Caco-2 (cell line): ENCODE measurements at regions of chr12 and their contacts with region 1.

Region 1: GRCh38 chr12:106223485-106224354 is 24.1 kb downstream of the CKAP4 start:
- DNase-seq: peak; percentile 68 to 79
- H3K4me3 ChIP-seq: no peak overlapping the region
- H3K4me3 Mint-ChIP-seq: no peak overlapping the region
- H3K27ac Mint-ChIP-seq: no peak overlapping the region
- H3K4me1 ChIP-seq: peaks cover 9% of the 10 kb centered on the region; the same call in 1 of the 2 replicates
- H3K4me1 Mint-ChIP-seq: peaks cover 8% of the 10 kb centered on the region
- H3K27me3 ChIP-seq: no peaks in the 10 kb centered on the region; the same call in 1 of the 2 replicates
- H3K27me3 Mint-ChIP-seq: peaks cover 3% of the 10 kb centered on the region
- CTCF ChIP-seq: peak; percentile 90 to 91

Region 2: DNA sequence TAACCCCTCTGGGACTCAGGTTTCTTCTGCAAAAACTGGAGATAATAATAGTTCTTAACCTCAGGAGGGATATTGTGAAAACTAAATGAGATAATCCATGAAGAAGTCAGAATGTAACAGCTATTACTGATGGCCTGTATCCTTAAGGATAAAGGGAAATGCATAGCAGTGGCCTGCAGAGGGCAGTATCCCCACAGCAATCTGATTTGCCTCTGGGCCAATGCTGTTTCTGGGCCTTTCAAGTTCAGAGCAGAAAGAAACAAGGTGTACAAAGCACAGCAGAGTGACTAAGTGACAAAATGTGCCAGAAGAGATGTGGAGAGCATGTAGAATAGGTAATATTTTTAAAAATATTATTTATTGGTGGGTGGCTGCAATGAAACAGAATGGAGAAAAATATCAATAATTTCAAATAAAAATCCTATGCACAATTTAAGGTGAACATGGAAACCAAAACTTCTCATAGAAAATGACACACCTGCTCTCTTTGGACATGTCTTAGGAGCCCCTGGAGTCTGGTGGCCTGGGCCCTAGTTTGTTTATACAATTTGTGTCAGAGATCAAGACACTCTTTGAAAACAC is 803.0 kb before region 1 on chr12:
- CTCF ChIA-PET with region 1: interaction called, 10 read pairs
- POLR2A ChIA-PET with region 1: no interaction called
- intact Hi-C with region 1: loop called (anchors 1 kb)
- DNase-seq: peak; percentile 73 to 82
- H3K4me3 ChIP-seq: no peak overlapping the region
- H3K4me3 Mint-ChIP-seq: no peak overlapping the region
- H3K27ac Mint-ChIP-seq: no peak overlapping the region
- H3K4me1 ChIP-seq: 0 out of 2 replicates have a peak, but pooled peaks cover under 1% of the 10 kb centered on the region
- H3K4me1 Mint-ChIP-seq: peaks cover 22% of the 10 kb centered on the region
- H3K27me3 ChIP-seq: no peaks in the 10 kb centered on the region
- H3K27me3 Mint-ChIP-seq: no peaks in the 10 kb centered on the region
- CTCF ChIP-seq: peak; percentile 80 to 90

Region 3: GRCh38 chr12:106123551-106124081 is 100.1 kb before region 1 on chr12:
- CTCF ChIA-PET with region 1: no interaction called
- POLR2A ChIA-PET with region 1: no interaction called
- intact Hi-C with region 1: no loop called
- DNase-seq: peak; percentile 43 to 62
- H3K4me3 ChIP-seq: no peak overlapping the region
- H3K4me3 Mint-ChIP-seq: no peak overlapping the region
- H3K27ac Mint-ChIP-seq: peak overlapping the region; percentile 85
- H3K4me1 ChIP-seq: peaks cover 71% of the 10 kb centered on the region
- H3K4me1 Mint-ChIP-seq: peaks cover 51% of the 10 kb centered on the region
- H3K27me3 ChIP-seq: no peaks in the 10 kb centered on the region
- H3K27me3 Mint-ChIP-seq: no peaks in the 10 kb centered on the region
- CTCF ChIP-seq: no peak

Region 4: DNA sequence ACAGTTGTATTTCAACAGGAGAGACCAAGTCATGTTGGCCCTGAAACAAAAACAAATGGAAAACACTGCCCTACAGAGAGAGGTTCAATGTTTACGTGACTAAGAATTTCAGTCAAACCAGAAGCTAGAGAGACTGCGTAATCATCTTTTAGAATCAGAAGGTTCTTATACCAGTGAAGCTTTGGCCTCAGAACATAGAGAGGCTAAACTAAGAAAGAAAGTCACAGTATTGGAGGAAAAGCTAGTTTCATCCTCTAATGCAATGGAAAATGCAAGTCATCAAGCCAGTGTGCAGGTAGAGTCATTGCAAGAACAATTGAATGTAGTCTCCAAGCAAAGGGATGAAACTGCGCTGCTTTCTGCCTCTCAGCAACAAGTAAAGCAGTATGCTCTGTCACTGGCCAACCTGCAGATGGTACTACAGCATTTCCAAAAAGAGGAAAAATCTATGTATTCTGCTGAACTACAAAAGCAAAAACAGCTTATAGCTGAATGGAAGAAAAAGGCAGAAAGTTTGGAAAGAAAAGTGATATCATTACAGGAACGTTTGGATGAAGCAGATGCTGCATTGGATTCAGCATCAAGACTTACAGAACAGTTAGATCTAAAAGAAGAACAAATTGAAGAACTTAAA is 52.5 kb before region 1 on chr12:
- CTCF ChIA-PET with region 1: interaction called, 9 read pairs
- POLR2A ChIA-PET with region 1: no interaction called
- intact Hi-C with region 1: loop called (anchors 1 kb)
- DNase-seq: no peak
- H3K4me3 ChIP-seq: no peak overlapping the region
- H3K4me3 Mint-ChIP-seq: no peak overlapping the region
- H3K27ac Mint-ChIP-seq: no peak overlapping the region
- H3K4me1 ChIP-seq: no peaks in the 10 kb centered on the region
- H3K4me1 Mint-ChIP-seq: no peaks in the 10 kb centered on the region
- H3K27me3 ChIP-seq: no peaks in the 10 kb centered on the region
- H3K27me3 Mint-ChIP-seq: peaks cover 12% of the 10 kb centered on the region
- CTCF ChIP-seq: no peak

Region 5: DNA sequence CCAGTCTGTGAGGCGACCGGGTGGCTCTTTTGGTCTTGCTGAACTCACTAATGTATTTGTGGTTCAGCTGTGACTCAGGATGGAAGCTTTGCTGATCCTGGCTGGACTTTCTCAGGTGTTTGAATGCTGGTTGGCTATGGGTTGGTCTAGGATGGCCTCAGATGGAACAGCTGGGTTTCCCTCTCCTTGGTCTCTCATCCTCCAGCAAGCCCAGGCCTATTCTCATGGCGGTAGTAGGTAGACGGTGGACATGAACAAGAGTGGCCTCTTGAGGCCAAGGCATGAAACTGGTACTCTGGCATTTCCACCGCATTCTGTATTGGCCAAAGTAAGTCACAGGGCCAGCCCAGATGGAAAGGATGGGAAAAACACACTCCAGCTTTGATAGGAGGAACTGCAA is 122.0 kb after region 1 on chr12:
- CTCF ChIA-PET with region 1: interaction called, 18 read pairs
- POLR2A ChIA-PET with region 1: no interaction called
- intact Hi-C with region 1: loop called (anchors 1 kb)
- DNase-seq: peak; percentile 65 to 72
- H3K4me3 ChIP-seq: no peak overlapping the region
- H3K4me3 Mint-ChIP-seq: no peak overlapping the region
- H3K27ac Mint-ChIP-seq: no peak overlapping the region
- H3K4me1 ChIP-seq: no peaks in the 10 kb centered on the region
- H3K4me1 Mint-ChIP-seq: no peaks in the 10 kb centered on the region
- H3K27me3 ChIP-seq: no peaks in the 10 kb centered on the region
- H3K27me3 Mint-ChIP-seq: no peaks in the 10 kb centered on the region
- CTCF ChIP-seq: peak in 1 of 2 experiments; percentile 53

Region 6: GRCh38 chr12:106919910-106920544 is 696.3 kb after region 1 on chr12:
- CTCF ChIA-PET with region 1: no interaction called
- POLR2A ChIA-PET with region 1: no interaction called
- intact Hi-C with region 1: loop called (anchors 10 kb)
- DNase-seq: peak in 1 of 2 experiments; percentile 45
- H3K4me3 ChIP-seq: no peak overlapping the region
- H3K4me3 Mint-ChIP-seq: no peak overlapping the region
- H3K27ac Mint-ChIP-seq: no peak overlapping the region
- H3K4me1 ChIP-seq: no peaks in the 10 kb centered on the region
- H3K4me1 Mint-ChIP-seq: no peaks in the 10 kb centered on the region
- H3K27me3 ChIP-seq: no peaks in the 10 kb centered on the region
- H3K27me3 Mint-ChIP-seq: peaks cover 3% of the 10 kb centered on the region
- CTCF ChIP-seq: peak; percentile 62 to 75

Region 7: GRCh38 chr12:107564946-107565345 is 1341.2 kb after region 1 on chr12:
- CTCF ChIA-PET with region 1: no interaction called
- POLR2A ChIA-PET with region 1: no interaction called
- intact Hi-C with region 1: no loop called
- DNase-seq: no peak
- H3K4me3 ChIP-seq: no peak overlapping the region
- H3K4me3 Mint-ChIP-seq: no peak overlapping the region
- H3K27ac Mint-ChIP-seq: no peak overlapping the region
- H3K4me1 ChIP-seq: no peaks in the 10 kb centered on the region
- H3K4me1 Mint-ChIP-seq: no peaks in the 10 kb centered on the region
- H3K27me3 ChIP-seq: no peaks in the 10 kb centered on the region
- H3K27me3 Mint-ChIP-seq: peaks cover 7% of the 10 kb centered on the region
- CTCF ChIP-seq: no peak